ENCODE measurements at regions of chr19 and their contacts with region 1.

Region 1: GRCh38 chr19:14081325-14082093 is 4.1 kb downstream of the C19orf67 start:
- DNase-seq: peak; percentile 97 to 98
- H3K4me3 ChIP-seq: peak overlapping the region; percentile 83
- H3K4me3 Mint-ChIP-seq: peak overlapping the region; percentile 93
- H3K27ac Mint-ChIP-seq: peak overlapping the region; percentile 95
- H3K4me1 ChIP-seq: peaks cover 10% of the 10 kb centered on the region; the same call in 1 of the 2 replicates
- H3K4me1 Mint-ChIP-seq: no peaks in the 10 kb centered on the region
- H3K27me3 ChIP-seq: no peaks in the 10 kb centered on the region
- H3K27me3 Mint-ChIP-seq: no peaks in the 10 kb centered on the region
- CTCF ChIP-seq: no peak

Region 2: GRCh38 chr19:14117668-14118164 is 36.2 kb after region 1 on chr19 and contains the start of gene PRKACA:
- CTCF ChIA-PET with region 1: no interaction called
- POLR2A ChIA-PET with region 1: no interaction called
- intact Hi-C with region 1: loop called (anchors 5 kb)
- DNase-seq: peak; percentile 98 to 99
- H3K4me3 ChIP-seq: peak within 1 kb of the TSS; percentile 79
- H3K4me3 Mint-ChIP-seq: peak within 1 kb of the TSS; percentile 90
- H3K27ac Mint-ChIP-seq: peak within 1 kb of the TSS; percentile 85
- H3K4me1 ChIP-seq: peaks cover 13% of the 10 kb centered on the region
- H3K4me1 Mint-ChIP-seq: peaks cover 8% of the 10 kb centered on the region
- H3K27me3 ChIP-seq: no peaks in the 10 kb centered on the region
- H3K27me3 Mint-ChIP-seq: no peaks in the 10 kb centered on the region
- CTCF ChIP-seq: no peak
- total RNA-seq, gene PRKACA: 46.4 and 51.9 TPM in 2 replicates